KBM-7 (cell line): ENCODE measurements at regions of chr10 and their contacts with region 1.

Region 1: GRCh38 chr10:23694446-23694920 is 255.6 kb downstream of the OTUD1 start:
- DNase-seq: no peak

Region 2: DNA sequence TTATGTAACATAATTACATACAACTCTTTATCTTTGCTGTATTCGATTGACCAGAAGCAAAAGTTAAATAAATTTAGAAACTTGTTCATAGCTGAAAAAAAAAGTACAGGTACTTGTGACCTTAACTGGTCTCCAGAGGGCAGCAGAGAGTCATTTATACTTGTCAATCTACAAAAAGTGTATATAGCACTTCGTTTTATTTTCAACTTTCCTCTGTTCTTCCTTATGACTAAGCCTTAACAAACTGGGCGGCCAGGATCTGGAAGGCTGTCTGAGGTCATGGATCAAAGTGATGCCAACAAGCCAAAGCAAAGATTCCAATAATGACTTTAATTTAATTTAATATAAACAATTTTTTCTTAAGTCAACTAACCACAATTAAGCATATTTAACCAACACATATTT is 379.6 kb before region 1 on chr10:
- in situ Hi-C with region 1: loop called (anchors 25 kb)
- DNase-seq: peak; percentile 52

Region 3: DNA sequence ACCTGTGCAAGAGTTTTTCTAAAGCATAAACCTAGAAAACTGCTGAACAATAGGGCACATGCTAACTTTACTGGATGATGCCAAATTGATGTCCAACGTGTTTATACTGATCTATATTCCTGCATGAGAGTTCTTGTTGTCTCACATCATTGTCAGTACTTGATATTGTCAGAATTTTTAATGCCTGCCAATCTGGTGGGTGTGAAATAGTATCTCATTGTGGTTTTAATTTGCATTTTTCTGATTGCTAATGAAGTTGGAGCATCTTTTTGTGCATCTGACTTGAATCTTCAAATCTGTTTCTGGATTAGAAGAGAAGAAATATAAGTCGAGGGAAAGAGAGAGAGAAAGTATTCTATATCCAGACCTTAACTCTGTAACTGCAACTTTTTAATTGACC is 204.7 kb after region 1 on chr10:
- in situ Hi-C with region 1: no loop called
- DNase-seq: no peak